ENCODE measurements at regions of chr2 and their contacts with region 1.

Region 1: GRCh38 chr2:101697124-101698013 is at the start of gene MAP4K4:
- DNase-seq: peak; percentile 85
- H3K4me3 Mint-ChIP-seq: no peak within 1 kb of the TSS
- H3K27ac Mint-ChIP-seq: peak within 1 kb of the TSS; percentile 80
- H3K4me1 Mint-ChIP-seq: peaks cover 17% of the 10 kb centered on the region
- H3K27me3 Mint-ChIP-seq: no peaks in the 10 kb centered on the region
- CTCF ChIP-seq: peak; percentile 23
- total RNA-seq, gene MAP4K4: 143 and 162 TPM in 2 replicates

Region 2: DNA sequence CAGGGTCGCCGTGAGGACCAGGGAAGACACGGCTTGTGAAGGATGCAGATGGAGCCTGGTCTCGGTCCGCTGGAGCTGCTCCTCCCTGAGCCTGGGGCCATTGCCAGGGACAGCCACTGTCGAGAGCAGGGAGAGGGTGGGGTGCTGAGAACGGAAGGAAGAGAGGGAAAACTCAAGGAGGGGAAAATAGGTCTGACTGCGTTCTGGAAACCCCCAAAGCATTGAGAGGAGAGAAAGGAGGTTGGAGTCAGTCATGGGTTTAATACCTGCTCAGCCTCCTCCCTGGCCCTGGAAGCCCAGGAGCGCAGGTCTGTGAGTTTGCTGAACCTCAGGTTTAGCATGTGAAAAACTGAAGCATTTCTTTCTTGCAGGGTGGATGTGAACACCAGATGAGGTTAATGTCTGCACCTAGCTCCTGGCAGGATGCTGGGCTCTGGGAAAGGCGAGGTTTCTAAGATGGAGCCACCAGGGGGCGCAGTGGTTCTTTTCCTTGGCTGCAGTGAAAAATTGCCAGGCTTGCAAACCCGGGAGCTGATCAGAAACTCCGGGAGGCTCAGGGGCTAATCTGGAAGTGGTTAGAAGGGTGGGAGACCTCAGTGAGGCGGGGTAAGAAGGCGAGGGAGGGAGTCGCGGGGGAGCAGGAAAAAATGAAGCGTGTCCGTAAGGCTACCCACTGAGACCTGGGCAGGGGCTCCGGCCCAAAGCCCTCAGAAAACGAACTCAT is 355.3 kb before region 1 on chr2:
- CTCF ChIA-PET with region 1: interaction called, 10 read pairs
- POLR2A ChIA-PET with region 1: interaction called, 5 read pairs
- intact Hi-C with region 1: loop called (anchors 2 kb)
- DNase-seq: peak; percentile 78
- H3K4me3 Mint-ChIP-seq: no peak overlapping the region
- H3K27ac Mint-ChIP-seq: no peak overlapping the region
- H3K4me1 Mint-ChIP-seq: peaks cover 5% of the 10 kb centered on the region
- H3K27me3 Mint-ChIP-seq: no peaks in the 10 kb centered on the region
- CTCF ChIP-seq: peak; percentile 78

Region 3: GRCh38 chr2:101518578-101519492 is 178.5 kb before region 1 on chr2:
- CTCF ChIA-PET with region 1: interaction called, 9 read pairs
- POLR2A ChIA-PET with region 1: interaction called, 12 read pairs
- intact Hi-C with region 1: loop called (anchors 2 kb)
- DNase-seq: peak; percentile 81
- H3K4me3 Mint-ChIP-seq: peak overlapping the region; percentile 44
- H3K27ac Mint-ChIP-seq: no peak overlapping the region
- H3K4me1 Mint-ChIP-seq: peaks cover 25% of the 10 kb centered on the region
- H3K27me3 Mint-ChIP-seq: no peaks in the 10 kb centered on the region
- CTCF ChIP-seq: peak; percentile 30

Region 4: GRCh38 chr2:101736861-101737291 is 39.5 kb after region 1 on chr2:
- CTCF ChIA-PET with region 1: interaction called, 9 read pairs
- POLR2A ChIA-PET with region 1: interaction called, 73 read pairs
- intact Hi-C with region 1: loop called (anchors 2 kb)
- DNase-seq: peak; percentile 91
- H3K4me3 Mint-ChIP-seq: peak overlapping the region; percentile 37
- H3K27ac Mint-ChIP-seq: peak overlapping the region; percentile 83
- H3K4me1 Mint-ChIP-seq: peaks cover 67% of the 10 kb centered on the region
- H3K27me3 Mint-ChIP-seq: no peaks in the 10 kb centered on the region
- CTCF ChIP-seq: no peak

Region 5: GRCh38 chr2:101751875-101752619 is 54.7 kb after region 1 on chr2:
- CTCF ChIA-PET with region 1: interaction called, 5 read pairs
- POLR2A ChIA-PET with region 1: interaction called, 27 read pairs
- intact Hi-C with region 1: no loop called
- DNase-seq: no peak
- H3K4me3 Mint-ChIP-seq: no peak overlapping the region
- H3K27ac Mint-ChIP-seq: peak overlapping the region; percentile 19
- H3K4me1 Mint-ChIP-seq: peaks cover 40% of the 10 kb centered on the region
- H3K27me3 Mint-ChIP-seq: no peaks in the 10 kb centered on the region
- CTCF ChIP-seq: no peak

Region 6: DNA sequence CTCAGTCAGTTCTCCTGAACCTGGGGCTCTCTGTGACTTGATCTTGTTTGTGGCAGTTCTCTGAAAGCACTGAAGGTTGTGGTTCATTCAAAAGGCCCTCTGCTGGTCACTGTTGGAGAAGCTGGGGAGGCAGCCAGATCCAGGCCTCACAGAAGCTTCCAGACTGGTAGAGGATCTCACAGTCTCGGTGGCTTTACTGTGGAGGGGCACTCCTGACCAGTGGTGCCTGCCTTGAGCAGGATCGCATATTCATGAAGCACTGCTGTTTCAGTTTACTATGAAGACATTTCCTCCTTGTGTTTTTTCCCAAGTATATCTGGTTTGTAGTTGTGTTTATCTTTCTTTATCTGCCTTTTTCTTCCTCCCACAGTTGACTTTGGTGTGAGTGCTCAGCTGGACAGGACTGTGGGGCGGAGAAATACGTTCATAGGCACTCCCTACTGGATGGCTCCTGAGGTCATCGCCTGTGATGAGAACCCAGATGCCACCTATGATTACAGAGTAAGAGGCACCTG is 134.0 kb after region 1 on chr2:
- CTCF ChIA-PET with region 1: interaction called, 24 read pairs
- POLR2A ChIA-PET with region 1: interaction called, 159 read pairs
- intact Hi-C with region 1: loop called (anchors 1 kb)
- DNase-seq: peak; percentile 72
- H3K4me3 Mint-ChIP-seq: no peak overlapping the region
- H3K27ac Mint-ChIP-seq: peak overlapping the region; percentile 3
- H3K4me1 Mint-ChIP-seq: peaks cover 29% of the 10 kb centered on the region
- H3K27me3 Mint-ChIP-seq: no peaks in the 10 kb centered on the region
- CTCF ChIP-seq: peak; percentile 65

Measured in MCF 10A (cell line).